Activated CD8-positive, alpha-beta T cell treated with anti-CD3 and anti-CD28 coated beads for 36 hours (primary cell): ENCODE measurements at regions of chr12 and their contacts with region 1.

Region 1: DNA sequence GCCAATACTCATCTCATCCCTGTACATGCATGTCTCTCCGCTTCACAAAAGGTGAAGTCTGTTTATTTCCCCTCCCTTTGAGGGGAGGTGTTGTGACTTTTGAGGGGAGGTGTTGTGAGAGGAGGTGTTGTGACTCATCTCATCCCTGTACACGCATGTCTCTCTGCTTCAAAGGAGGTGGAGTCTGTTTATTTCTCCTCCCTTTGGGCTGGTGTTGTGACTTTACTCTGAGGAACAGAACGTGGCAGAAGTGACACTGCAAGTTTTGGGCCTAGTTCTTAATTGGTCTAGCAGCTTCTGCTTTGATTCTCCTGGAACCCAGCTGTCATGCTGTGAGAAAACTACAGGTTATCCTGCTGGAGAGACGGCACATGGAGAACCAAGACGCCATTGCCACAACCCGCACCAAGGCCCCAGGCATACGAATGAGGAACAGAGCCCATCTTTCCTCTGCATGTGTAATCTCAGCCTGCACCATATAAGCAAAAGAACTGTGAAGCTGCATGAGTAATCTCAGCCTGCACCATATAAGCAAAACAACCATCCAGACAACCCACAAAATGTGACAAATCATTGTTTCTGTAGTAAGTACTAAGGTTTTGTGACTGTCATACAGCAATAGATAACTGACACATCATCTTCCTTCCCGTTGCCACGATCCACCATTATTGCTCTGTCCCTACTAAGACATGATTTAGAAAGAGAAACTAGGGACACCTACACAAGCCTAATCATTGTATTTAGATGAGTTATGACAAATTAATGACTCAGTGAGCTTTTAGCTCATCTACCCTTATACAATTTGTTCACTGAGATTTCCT is 30.0 kb downstream of the GALNT4 start:
- DNase-seq: peak; percentile 73
- ATAC-seq: peak; percentile 92
- H3K4me3 Mint-ChIP-seq: no peak overlapping the region
- H3K27ac Mint-ChIP-seq: peak overlapping the region; percentile 90
- H3K4me1 Mint-ChIP-seq: peaks cover 20% of the 10 kb centered on the region
- H3K27me3 Mint-ChIP-seq: no peaks in the 10 kb centered on the region
- CTCF ChIP-seq: no peak

Region 2: GRCh38 chr12:89373763-89374572 is 120.7 kb before region 1 on chr12:
- CTCF ChIA-PET with region 1: no interaction called
- POLR2A ChIA-PET with region 1: no interaction called
- intact Hi-C with region 1: no loop called
- DNase-seq: no peak
- ATAC-seq: no peak
- H3K4me3 Mint-ChIP-seq: no peak overlapping the region
- H3K27ac Mint-ChIP-seq: no peak overlapping the region
- H3K4me1 Mint-ChIP-seq: peaks cover 23% of the 10 kb centered on the region
- H3K27me3 Mint-ChIP-seq: no peaks in the 10 kb centered on the region
- CTCF ChIP-seq: no peak

Region 3: DNA sequence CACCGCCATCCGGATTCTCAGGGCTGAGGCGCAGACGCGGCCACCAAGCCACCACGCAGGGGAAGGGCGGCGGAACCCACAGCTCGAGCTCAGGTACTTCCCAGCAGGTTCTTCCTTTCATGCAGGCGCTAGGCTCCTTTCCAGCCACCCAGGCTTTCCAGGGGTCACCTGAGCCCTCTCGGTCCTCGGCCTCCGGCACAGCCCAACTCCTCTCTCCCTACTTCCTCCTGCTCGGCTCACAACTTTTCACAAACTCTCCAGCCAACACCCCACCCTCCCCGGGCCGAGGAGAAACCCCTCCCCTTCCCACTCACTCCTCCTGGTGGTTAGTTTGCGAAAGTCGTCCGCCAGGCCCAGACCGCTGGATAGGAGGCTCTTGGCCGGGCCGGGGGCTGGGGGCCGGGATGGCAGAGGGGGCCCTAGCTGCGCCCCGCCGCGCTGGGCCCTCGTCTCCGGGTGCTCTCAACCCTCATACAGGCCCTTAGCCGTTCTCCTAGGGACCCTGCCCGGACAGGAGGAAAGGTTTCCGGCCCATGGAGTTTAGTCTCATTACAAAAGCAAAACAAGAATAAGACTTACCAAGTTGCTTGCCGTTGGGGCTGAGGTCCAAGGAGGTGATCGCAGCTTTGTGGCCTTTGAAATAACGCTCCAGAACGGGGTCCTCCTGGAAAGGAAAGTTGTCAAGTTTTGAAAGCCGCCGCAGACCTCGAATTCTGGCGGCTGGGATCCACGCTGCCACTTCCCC is 30.1 kb after region 1 on chr12 and contains the start of gene GALNT4:
- CTCF ChIA-PET with region 1: interaction called, 9 read pairs
- POLR2A ChIA-PET with region 1: interaction called, 4 read pairs
- intact Hi-C with region 1: loop called (anchors 2 kb)
- DNase-seq: peak; percentile 80
- ATAC-seq: peak; percentile 59
- H3K4me3 Mint-ChIP-seq: peak within 1 kb of the TSS; percentile 98
- H3K27ac Mint-ChIP-seq: peak within 1 kb of the TSS; percentile 99
- H3K4me1 Mint-ChIP-seq: peaks cover 58% of the 10 kb centered on the region
- H3K27me3 Mint-ChIP-seq: no peaks in the 10 kb centered on the region
- CTCF ChIP-seq: peak; percentile 65
- total RNA-seq, gene GALNT4: 5.9 to 6.4 TPM

Region 4: GRCh38 chr12:89544681-89545184 is 50.1 kb after region 1 on chr12:
- CTCF ChIA-PET with region 1: no interaction called
- POLR2A ChIA-PET with region 1: no interaction called
- intact Hi-C with region 1: no loop called
- DNase-seq: no peak
- ATAC-seq: no peak
- H3K4me3 Mint-ChIP-seq: no peak overlapping the region
- H3K27ac Mint-ChIP-seq: no peak overlapping the region
- H3K4me1 Mint-ChIP-seq: peaks cover 6% of the 10 kb centered on the region
- H3K27me3 Mint-ChIP-seq: no peaks in the 10 kb centered on the region
- CTCF ChIP-seq: no peak